ENCODE measurements at regions of chr17 and their contacts with region 1.

Region 1: DNA sequence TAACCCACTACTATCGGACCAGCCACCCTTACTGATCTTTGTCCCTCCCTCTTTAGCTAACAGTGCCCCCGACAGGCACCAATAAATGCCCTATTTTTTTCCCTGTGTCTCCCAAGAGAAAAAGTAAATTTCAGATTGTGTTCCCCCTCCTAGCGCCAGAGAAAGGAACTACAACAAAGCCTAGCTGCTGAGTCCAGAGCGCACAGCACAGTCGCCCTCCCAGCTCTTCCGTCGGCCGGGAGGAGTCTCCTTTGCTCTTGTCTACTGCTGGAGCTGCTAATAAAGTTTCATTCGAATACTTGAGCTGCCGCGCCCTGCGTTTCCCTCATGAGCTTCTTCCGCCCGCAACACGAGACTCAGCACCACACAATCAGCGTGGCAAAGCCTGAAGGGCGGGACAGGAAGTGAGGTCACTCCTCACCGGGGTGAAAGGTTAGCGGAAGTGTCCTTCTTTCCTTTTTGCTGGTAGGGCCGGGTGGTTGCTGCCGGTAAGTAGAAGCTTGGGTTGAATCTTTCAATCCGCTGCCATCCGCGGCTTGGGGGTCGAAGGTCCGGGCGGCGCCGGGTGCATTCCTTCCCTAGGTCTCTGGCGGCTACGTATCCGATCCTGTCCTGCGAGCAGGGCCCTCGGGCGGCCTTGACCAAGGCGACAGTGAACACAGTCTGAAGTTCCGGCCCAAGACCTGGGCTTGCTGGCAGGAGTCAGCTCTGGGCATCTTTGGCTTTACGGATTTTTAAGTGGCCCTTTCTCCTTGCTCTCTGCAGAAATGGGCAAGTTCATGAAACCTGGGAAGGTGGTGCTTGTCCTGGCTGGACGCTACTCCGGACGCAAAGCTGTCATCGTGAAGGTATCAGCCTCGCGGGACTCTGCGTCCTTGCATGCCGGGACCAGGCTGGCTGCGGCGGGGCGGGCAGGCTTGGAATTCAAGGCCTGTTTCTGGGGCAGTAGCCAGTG is at the start of gene RPL27:
- DNase-seq: peak; percentile 100
- ATAC-seq: peak; percentile 91
- H3K4me3 ChIP-seq: peak within 1 kb of the TSS; percentile 81 to 95 (median 92)
- H3K27ac ChIP-seq: peak within 1 kb of the TSS; percentile 94
- H3K4me1 ChIP-seq: peaks cover 48% of the 10 kb centered on the region
- H3K27me3 ChIP-seq: no peaks in the 10 kb centered on the region; a peak in 1 of 5 replicates
- CTCF ChIP-seq: peak; percentile 90
- EP300 ChIP-seq: peak; percentile 77 to 81; a peak in 3 of 4 replicates
- POLR2A ChIP-seq: peak; percentile 93 to 98
- RAD21 ChIP-seq: peak; percentile 85
- total RNA-seq, gene RPL27: 1,585 and 1,854 TPM in 2 replicates

Region 2: DNA sequence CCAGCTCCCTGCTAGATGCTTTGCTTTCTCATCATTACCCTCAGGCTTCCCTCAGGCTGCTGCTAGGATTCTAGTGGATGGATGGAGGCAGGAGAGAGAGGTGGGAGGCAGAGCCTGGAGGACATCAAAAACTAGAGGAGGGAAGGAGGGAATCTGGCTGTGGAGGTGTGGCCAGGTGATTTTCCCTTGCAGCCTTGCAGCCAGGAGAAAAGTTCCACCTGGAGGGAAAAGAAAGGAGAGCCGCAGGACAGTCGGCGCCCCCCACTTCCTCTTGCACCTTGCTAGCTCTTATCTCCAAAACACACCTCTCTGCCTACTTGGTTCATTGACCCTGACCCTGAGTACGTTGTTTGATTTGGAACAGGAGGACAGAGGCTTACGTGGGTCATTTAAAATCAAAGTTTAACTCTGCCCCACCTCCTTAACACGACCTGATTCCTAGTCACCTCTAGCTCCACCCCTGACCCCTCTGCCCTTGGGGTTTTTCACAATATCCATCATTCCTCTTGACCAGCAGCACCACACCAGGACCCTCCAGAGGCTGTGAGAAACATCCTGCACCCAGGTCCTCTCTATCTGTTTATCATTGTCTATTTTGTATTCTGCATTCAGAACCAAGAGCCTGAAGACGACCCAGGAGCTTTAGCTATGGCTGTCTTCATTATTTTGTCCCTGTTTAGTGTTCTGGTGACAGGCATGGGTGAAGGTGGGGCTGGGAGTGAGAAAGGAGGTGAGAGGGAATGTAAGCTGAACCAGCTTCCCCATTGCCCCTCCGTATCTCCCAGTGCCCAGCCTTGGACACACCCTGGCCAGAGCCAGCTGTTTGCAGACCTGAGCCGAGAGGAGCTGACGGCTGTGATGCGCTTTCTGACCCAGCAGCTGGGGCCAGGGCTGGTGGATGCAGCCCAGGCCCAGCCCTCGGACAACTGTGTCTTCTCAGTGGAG is 131.4 kb before region 1 on chr17:
- CTCF ChIA-PET with region 1: no interaction called
- POLR2A ChIA-PET with region 1: interaction called, 12 read pairs
- in situ Hi-C with region 1: no loop called
- intact Hi-C with region 1: no loop called
- DNase-seq: peak; percentile 68
- ATAC-seq: peak; percentile 60
- H3K4me3 ChIP-seq: peak overlapping the region in 2 of 3 experiments; percentile 18 to 44; a peak in 4 of 6 replicates
- H3K27ac ChIP-seq: peak overlapping the region; percentile 62
- H3K4me1 ChIP-seq: peaks cover 73% of the 10 kb centered on the region
- H3K27me3 ChIP-seq: no peaks in the 10 kb centered on the region
- CTCF ChIP-seq: no peak
- EP300 ChIP-seq: peak in 1 of 2 experiments; percentile 91; a peak in 2 of 4 replicates
- POLR2A ChIP-seq: peak in 1 of 2 experiments; percentile 18; a peak in 1 of 4 replicates
- RAD21 ChIP-seq: no peak

Region 3: DNA sequence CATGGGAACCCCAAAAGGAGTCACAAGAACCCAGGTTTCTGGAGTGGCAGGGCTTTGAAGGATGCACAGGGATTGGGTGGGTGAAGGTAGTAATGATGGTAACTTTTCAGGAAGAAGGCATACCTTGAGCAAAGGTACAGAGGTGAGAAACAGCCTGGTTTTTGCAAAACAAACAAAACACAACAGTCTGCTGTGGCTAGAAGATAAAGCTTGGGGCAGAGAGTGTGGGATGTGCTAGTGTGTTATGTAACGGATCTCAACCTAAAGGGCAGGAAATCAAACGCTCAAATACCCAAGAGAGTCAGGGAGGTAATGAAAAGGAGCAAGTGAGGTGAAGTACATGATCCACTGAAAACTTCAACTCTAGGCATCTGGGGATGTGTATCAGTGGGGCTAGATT is 23.0 kb before region 1 on chr17:
- CTCF ChIA-PET with region 1: interaction called, 3 read pairs
- POLR2A ChIA-PET with region 1: interaction called, 53 read pairs
- in situ Hi-C with region 1: no loop called
- intact Hi-C with region 1: loop called (anchors 2 kb)
- DNase-seq: peak; percentile 56
- ATAC-seq: peak; percentile 41
- H3K4me3 ChIP-seq: no peak overlapping the region
- H3K27ac ChIP-seq: peak overlapping the region; percentile 39
- H3K4me1 ChIP-seq: peaks cover 33% of the 10 kb centered on the region
- H3K27me3 ChIP-seq: no peaks in the 10 kb centered on the region; a peak in 1 of 5 replicates
- CTCF ChIP-seq: no peak
- EP300 ChIP-seq: no peak
- POLR2A ChIP-seq: no peak
- RAD21 ChIP-seq: no peak

Region 4: DNA sequence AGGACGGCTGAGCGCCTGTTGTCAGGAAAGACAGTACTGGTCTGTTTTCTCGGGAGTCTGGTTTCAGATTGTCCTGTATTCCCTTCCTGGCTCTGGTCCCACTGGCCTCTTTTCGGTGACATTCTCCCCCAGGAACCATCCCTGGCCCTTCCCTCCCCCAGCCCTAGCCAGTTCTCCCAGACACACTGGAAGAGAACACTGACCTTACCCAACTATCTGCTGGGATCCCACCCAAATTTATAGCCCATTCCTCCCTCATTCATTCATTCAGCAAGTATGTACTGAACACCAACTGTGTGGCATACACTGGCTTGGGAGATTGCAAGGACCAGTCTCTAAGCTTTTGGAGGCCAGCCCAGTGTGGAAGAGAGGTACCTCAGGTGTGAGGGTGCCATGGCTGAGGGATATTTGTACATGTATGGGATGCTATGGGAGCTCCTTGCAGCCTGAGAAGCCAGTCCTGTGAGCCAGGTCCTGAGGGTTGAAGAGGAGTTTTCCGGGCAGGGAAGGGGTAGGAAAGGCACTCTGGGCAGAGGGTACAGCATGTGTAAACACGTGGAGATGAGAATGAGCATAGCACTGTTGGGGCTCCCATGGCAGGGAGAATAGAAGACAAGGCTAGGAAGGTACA is 32.0 kb after region 1 on chr17:
- CTCF ChIA-PET with region 1: no interaction called
- POLR2A ChIA-PET with region 1: interaction called, 22 read pairs
- in situ Hi-C with region 1: no loop called
- intact Hi-C with region 1: no loop called
- DNase-seq: no peak
- ATAC-seq: no peak
- H3K4me3 ChIP-seq: peak overlapping the region in 1 of 3 experiments; percentile 56; a peak in 2 of 6 replicates
- H3K27ac ChIP-seq: no peak overlapping the region
- H3K4me1 ChIP-seq: peaks cover 50% of the 10 kb centered on the region
- H3K27me3 ChIP-seq: no peaks in the 10 kb centered on the region
- CTCF ChIP-seq: no peak
- EP300 ChIP-seq: no peak
- POLR2A ChIP-seq: no peak
- RAD21 ChIP-seq: no peak

Region 5: DNA sequence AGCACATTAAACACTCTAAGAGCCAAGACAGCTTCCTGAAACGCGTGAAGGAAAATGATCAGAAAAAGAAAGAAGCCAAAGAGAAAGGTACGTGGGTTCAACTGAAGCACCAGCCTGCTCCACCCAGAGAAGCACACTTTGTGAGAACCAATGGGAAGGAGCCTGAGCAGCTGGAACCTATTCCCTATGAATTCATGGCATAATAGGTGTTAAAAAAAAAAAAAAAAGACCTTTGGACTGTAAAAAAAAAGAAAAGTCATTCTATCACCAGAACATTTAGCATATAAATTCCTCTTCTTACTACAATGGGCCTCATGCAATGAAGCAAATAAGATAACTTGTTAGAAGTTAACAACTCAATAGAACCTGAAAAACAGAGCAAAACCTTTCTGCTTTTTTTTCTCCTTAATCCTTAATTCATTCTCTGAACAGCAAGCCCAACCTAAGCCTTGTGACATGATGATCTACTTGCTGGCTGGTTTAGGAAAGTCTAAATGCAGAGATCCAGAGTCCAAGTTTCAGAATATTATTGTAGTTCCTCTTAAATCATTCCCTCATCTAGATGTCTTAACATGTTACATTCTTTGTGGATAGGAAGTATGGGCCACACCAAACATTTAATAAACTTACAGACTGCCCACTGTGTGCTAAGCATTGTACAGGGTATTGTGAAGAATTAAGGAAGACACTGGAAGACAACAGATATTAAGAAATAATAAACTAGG is 81.5 kb after region 1 on chr17:
- CTCF ChIA-PET with region 1: no interaction called
- POLR2A ChIA-PET with region 1: no interaction called
- in situ Hi-C with region 1: no loop called
- intact Hi-C with region 1: no loop called
- DNase-seq: no peak
- ATAC-seq: no peak
- H3K4me3 ChIP-seq: no peak overlapping the region
- H3K27ac ChIP-seq: no peak overlapping the region
- H3K4me1 ChIP-seq: no peaks in the 10 kb centered on the region
- H3K27me3 ChIP-seq: no peaks in the 10 kb centered on the region
- CTCF ChIP-seq: no peak
- EP300 ChIP-seq: no peak
- POLR2A ChIP-seq: no peak
- RAD21 ChIP-seq: no peak

Region 6: DNA sequence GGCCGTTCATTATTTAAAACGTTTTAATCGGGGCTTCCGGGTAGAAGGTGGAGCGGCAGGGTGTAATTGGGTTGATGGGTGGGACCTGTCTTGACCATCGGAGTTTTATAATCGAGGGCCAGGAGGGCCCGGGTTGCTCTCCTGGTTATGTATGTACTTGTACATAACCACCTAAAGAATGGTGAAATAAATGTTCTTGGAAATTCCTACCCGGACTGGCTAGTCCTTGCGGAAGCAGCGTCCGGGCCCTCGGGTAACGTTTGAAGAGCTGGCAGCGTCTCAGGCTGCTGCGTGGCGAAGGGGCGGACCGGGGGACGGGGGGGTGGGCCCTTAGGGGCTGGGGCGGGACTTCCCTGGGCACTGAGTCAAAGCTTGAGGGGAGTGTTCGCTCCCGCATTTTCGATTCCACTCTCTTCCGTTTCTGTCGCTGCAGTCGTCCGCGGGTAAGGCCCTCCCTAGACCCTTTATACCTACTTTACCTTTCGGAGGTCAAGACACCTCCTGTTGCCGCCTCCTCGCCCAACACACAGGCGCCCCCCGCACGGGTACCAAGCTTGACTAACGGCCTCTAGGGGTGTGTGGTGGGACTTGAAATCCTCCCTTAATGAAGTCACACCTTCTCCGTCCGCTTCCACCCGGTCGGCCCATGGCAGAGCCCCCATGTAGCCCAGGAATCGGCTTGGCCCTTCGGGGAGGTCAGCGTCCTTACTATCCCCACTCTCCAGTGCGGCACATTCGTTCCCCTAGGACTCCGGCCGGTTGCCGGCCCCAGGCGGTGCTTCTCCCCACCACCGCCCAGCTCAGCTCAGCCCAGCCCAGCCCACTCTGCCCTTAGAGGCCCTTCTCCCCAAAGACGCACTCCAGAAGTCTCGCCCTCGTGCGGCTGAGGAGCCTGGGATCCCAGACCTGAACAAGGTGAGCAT is 213.5 kb after region 1 on chr17 and contains the start of gene TMEM106A:
- CTCF ChIA-PET with region 1: no interaction called
- POLR2A ChIA-PET with region 1: interaction called, 19 read pairs
- in situ Hi-C with region 1: no loop called
- intact Hi-C with region 1: no loop called
- DNase-seq: peak; percentile 75
- ATAC-seq: peak; percentile 81
- H3K4me3 ChIP-seq: peak within 1 kb of the TSS; percentile 77 to 98 (median 77)
- H3K27ac ChIP-seq: peak within 1 kb of the TSS; percentile 80
- H3K4me1 ChIP-seq: peaks cover 62% of the 10 kb centered on the region
- H3K27me3 ChIP-seq: no peaks in the 10 kb centered on the region; a peak in 1 of 5 replicates
- CTCF ChIP-seq: peak; percentile 48
- EP300 ChIP-seq: no peak
- POLR2A ChIP-seq: peak; percentile 82 to 97
- RAD21 ChIP-seq: peak; percentile 43
- total RNA-seq, gene TMEM106A: 7.3 and 16.9 TPM in 2 replicates

Region 7: DNA sequence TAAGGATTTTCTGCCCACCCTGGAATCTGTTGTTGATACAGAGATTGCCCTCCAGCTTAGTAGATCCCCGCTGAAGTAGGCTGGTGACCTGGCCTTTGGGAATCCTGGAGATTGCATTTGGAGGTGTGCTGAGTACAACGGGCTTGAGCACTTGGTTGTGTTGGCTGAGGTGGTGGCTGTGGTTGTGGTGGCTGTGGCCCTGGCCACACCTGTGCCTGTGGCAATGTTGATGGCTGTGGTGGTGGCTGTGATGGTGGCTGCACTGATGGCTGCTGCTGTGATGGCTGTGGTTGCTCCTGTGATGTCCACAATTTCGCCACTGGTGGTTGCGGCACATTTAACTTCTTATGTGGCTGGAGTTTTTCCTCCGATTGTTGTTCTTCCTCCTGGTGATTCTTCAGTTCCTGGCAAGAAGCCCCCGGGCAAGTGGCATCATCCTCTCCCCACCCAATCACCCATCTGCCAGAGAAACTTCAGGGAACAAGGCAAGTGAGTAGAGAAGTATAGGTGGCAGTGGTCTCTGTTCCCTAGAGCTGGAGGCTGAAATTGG is 226.0 kb after region 1 on chr17:
- CTCF ChIA-PET with region 1: no interaction called
- POLR2A ChIA-PET with region 1: no interaction called
- in situ Hi-C with region 1: no loop called
- intact Hi-C with region 1: no loop called
- DNase-seq: no peak
- ATAC-seq: peak; percentile 12
- H3K4me3 ChIP-seq: no peak overlapping the region
- H3K27ac ChIP-seq: peak overlapping the region; percentile 12
- H3K4me1 ChIP-seq: peaks cover 14% of the 10 kb centered on the region
- H3K27me3 ChIP-seq: no peaks in the 10 kb centered on the region
- CTCF ChIP-seq: no peak
- EP300 ChIP-seq: no peak
- POLR2A ChIP-seq: no peak
- RAD21 ChIP-seq: no peak

Measured in HepG2 (cell line).